ENCODE measurements at regions of chr6 and their contacts with region 1.

Region 1: GRCh38 chr6:142871910-142872331 is 73.1 kb downstream of the HIVEP2 start:
- DNase-seq: peak; percentile 55
- H3K4me3 Mint-ChIP-seq: peak overlapping the region; percentile 40
- H3K27ac Mint-ChIP-seq: peak overlapping the region; percentile 78
- H3K4me1 Mint-ChIP-seq: peaks cover 86% of the 10 kb centered on the region
- H3K27me3 Mint-ChIP-seq: no peaks in the 10 kb centered on the region

Region 2: DNA sequence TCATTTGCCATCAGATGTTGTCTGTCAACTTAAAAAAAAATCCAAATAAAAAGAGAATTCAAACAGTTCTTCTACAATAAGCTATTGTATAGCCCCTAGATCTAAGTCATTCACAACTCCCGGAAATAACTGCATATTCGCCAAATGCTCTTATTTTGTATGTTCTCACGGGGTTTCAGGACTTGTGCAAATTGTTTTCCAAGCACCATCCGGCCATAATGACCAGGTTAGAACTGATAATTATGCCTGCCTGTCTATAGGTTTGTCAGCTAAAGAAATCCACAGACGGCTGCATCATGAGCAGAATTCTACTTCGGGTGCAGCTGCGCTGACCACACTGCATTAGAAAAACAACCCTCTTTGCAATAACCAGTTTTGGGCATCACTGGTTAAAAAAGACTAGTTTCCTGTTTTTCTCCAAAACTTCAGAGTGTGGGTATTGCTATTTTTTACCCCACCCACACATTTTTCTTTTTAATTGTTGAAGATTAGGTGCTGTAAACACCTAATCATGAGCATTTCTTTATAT is 14.6 kb before region 1 on chr6:
- intact Hi-C with region 1: loop called (anchors 1 kb)
- DNase-seq: no peak
- H3K4me3 Mint-ChIP-seq: peak overlapping the region; percentile 80
- H3K27ac Mint-ChIP-seq: peak overlapping the region; percentile 95
- H3K4me1 Mint-ChIP-seq: peaks cover 81% of the 10 kb centered on the region
- H3K27me3 Mint-ChIP-seq: no peaks in the 10 kb centered on the region

Region 3: GRCh38 chr6:142952614-142953013 is 80.7 kb after region 1 on chr6:
- intact Hi-C with region 1: no loop called
- DNase-seq: no peak
- H3K4me3 Mint-ChIP-seq: no peak overlapping the region
- H3K27ac Mint-ChIP-seq: no peak overlapping the region
- H3K4me1 Mint-ChIP-seq: peaks cover 22% of the 10 kb centered on the region
- H3K27me3 Mint-ChIP-seq: no peaks in the 10 kb centered on the region

Region 4: GRCh38 chr6:143248359-143248758 is 376.4 kb after region 1 on chr6:
- intact Hi-C with region 1: no loop called
- DNase-seq: no peak
- H3K4me3 Mint-ChIP-seq: no peak overlapping the region
- H3K27ac Mint-ChIP-seq: no peak overlapping the region
- H3K4me1 Mint-ChIP-seq: peaks cover 5% of the 10 kb centered on the region
- H3K27me3 Mint-ChIP-seq: no peaks in the 10 kb centered on the region

Measured in activated T-helper 1 cell treated with anti-CD3 and anti-CD28 coated beads, Interleukin-12 subunit alpha, Interleukin-12 subunit beta, Interleukin-2, Interleukin-4 antibody, amounts not matched to agents 30 ng/mL and 10 ng/mL and 1 ng/mL, durations not matched to agents 14 hours and 24 hours and 36 hours (primary cell).